ENCODE measurements at regions of chr3 and their contacts with region 1.

Region 1: DNA sequence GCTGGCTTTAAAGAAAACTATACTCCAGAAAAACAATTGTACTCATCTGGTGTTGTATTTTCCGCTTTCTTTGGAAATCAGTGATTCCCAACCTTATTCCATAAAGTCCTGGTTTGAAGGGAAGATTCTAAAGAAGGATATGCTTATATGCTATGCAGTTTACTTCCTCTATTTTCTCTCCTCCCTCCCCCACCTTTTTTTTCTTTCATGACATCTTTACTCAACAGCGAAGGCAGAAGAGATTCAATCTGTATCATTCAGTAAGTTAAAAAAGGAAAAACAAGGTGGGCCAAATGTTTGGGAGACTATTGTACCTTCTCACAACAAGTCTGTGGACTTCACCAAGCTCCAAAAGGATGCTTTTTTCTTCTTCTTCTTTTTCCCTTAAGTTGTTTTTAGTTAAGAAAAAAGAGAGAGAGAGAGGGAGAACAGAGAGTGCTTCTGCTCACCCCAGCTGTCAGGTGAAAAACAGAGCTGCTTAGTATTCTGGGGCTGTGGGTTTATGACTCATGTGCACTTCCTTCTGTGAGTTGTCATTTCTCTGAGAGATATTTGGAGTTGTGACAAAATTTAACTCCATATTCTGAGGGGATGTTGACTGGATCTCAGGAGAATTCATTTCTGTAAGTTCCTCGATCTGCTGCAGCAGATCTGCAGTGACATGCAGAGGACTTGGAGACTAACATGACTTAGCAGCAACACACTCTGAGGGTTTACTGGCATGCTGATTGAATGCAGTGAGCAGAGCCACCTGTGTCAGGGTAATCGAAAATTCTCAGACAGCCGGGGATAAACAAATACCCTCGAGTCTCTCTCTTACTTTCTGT is 70.7 kb downstream of the SSR3 start:
- DNase-seq: peak; percentile 87
- H3K4me3 Mint-ChIP-seq: peak overlapping the region; percentile 81
- H3K27ac Mint-ChIP-seq: peak overlapping the region; percentile 87
- H3K4me1 Mint-ChIP-seq: peaks cover 32% of the 10 kb centered on the region
- H3K27me3 Mint-ChIP-seq: peaks cover 8% of the 10 kb centered on the region

Region 2: GRCh38 chr3:156519758-156520162 is 35.6 kb after region 1 on chr3:
- intact Hi-C with region 1: loop called (anchors 5 kb)
- DNase-seq: peak; percentile 59
- H3K4me3 Mint-ChIP-seq: no peak overlapping the region
- H3K27ac Mint-ChIP-seq: no peak overlapping the region
- H3K4me1 Mint-ChIP-seq: peaks cover 22% of the 10 kb centered on the region
- H3K27me3 Mint-ChIP-seq: peaks cover 72% of the 10 kb centered on the region

Region 3: GRCh38 chr3:156605686-156606605 is 121.8 kb after region 1 on chr3:
- intact Hi-C with region 1: loop called (anchors 5 kb)
- DNase-seq: no peak
- H3K4me3 Mint-ChIP-seq: peak overlapping the region; percentile 86
- H3K27ac Mint-ChIP-seq: no peak overlapping the region
- H3K4me1 Mint-ChIP-seq: peaks cover 33% of the 10 kb centered on the region
- H3K27me3 Mint-ChIP-seq: peaks cover 22% of the 10 kb centered on the region

Region 4: GRCh38 chr3:157130467-157131251 is 646.5 kb after region 1 on chr3:
- intact Hi-C with region 1: loop called (anchors 5 kb)
- DNase-seq: peak; percentile 91
- H3K4me3 Mint-ChIP-seq: peak overlapping the region; percentile 78
- H3K27ac Mint-ChIP-seq: peak overlapping the region; percentile 98
- H3K4me1 Mint-ChIP-seq: peaks cover 82% of the 10 kb centered on the region
- H3K27me3 Mint-ChIP-seq: no peaks in the 10 kb centered on the region